Gastrocnemius medialis (tissue), 4 donors: ENCODE measurements at regions of chr1 and their contacts with region 1.

Region 1: DNA sequence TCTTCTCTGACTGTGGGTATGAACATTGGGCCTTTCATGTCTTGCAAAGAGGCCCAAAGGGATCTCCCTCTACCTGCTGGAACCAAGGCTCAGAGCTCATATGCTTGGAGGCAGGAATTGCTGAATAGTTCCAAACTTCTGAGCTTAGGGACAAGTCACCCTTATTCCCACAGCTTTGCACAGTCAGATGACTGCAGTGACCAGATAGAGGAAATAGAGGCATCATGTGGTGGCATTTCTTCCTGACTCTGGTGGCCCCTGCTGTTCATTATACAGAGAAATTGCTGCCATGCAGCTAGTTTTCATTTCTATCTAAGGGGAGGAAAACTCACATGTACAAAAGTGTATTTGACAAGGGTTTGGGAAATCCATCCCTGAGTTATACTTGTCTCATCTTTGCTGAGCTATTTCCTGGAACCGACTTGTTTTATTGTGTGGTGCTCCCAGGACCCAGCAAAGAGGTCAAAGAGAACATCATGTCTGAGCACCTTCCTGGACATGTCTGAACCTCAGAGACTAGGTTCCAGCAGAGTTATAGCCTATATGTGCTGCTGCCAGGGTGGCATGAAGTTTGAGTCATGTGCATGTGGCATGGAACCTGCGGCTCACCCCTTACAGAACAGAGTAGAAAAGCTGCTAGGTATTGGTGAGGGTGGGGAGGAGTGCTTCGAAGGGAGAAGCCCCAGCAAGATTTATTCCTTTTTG is 131.2 kb downstream of the PIK3R3 start:
- DNase-seq: no peak
- ATAC-seq: no peak
- H3K4me3 ChIP-seq: no peak overlapping the region
- H3K27ac ChIP-seq: peak overlapping the region in 3 of 4 donors; percentile 5 to 65 (median 23)
- H3K4me1 ChIP-seq: peaks cover 0 to 9% of the 10 kb centered on the region in 2 donors
- H3K27me3 ChIP-seq: no peaks in the 10 kb centered on the region
- CTCF ChIP-seq: no peak
- POLR2A ChIP-seq: no peak

Region 2: GRCh38 chr1:45945426-45945825 is 55.8 kb before region 1 on chr1:
- in situ Hi-C with region 1: loop called in 1 of 4 experiments (anchors 10 kb)
- intact Hi-C with region 1: no loop called
- DNase-seq: no peak
- ATAC-seq: no peak
- H3K4me3 ChIP-seq: no peak overlapping the region
- H3K27ac ChIP-seq: peak overlapping the region; percentile 16 to 70 (median 45)
- H3K4me1 ChIP-seq: peaks cover 12 to 20% of the 10 kb centered on the region in 2 donors
- H3K27me3 ChIP-seq: no peaks in the 10 kb centered on the region
- CTCF ChIP-seq: no peak
- POLR2A ChIP-seq: no peak